ENCODE measurements at regions of chr10 and their contacts with region 1.

Region 1: DNA sequence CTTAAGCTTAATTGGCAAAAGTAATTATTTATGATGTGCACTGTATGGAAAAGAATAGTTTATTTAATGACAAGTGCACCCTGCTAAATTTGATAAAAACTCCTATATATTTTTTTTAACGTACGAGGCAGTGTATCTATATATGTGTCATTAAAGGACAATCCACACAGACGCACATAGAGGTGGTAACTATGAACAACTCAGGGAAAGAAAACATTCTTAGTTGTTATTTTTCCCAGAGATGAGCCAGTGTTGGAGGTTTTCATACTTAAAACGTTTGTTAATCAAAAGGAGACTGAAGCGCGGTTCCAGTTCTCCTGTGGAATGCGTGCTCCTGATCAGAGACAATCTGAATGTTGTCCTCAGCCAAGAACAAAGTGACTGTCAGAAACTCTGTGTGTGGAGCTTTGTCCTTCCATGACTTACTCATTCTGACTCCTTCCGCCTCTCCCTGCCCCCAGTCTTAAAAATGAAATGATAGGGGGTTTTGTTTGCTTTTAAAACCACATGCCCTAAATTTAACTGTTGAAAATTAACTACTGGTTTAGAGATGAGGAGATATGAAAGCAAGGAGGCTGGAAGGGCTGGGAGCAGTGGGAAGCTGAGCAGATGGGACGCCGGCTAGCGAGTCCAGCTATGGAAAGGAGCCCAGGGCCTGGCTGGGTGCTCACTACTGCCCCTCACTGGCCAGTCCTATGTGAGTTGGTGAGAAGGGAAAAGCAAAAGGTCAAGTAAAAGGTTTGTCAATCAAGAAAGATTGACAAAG is 99.6 kb downstream of the SVIL start:
- DNase-seq: peak; percentile 80
- ATAC-seq: peak; percentile 89
- H3K4me3 Mint-ChIP-seq: no peak overlapping the region
- H3K27ac Mint-ChIP-seq: no peak overlapping the region
- H3K4me1 Mint-ChIP-seq: peaks cover 49% of the 10 kb centered on the region
- H3K27me3 Mint-ChIP-seq: no peaks in the 10 kb centered on the region
- CTCF ChIP-seq: peak; percentile 75

Region 2: GRCh38 chr10:29508554-29509244 is 26.5 kb before region 1 on chr10:
- CTCF ChIA-PET with region 1: interaction called, 15 read pairs
- POLR2A ChIA-PET with region 1: no interaction called
- DNase-seq: no peak
- ATAC-seq: no peak
- H3K4me3 Mint-ChIP-seq: no peak overlapping the region
- H3K27ac Mint-ChIP-seq: peak overlapping the region; percentile 10; the same call in 1 of the 2 replicates
- H3K4me1 Mint-ChIP-seq: peaks cover 11% of the 10 kb centered on the region
- H3K27me3 Mint-ChIP-seq: no peaks in the 10 kb centered on the region
- CTCF ChIP-seq: no peak

Region 3: DNA sequence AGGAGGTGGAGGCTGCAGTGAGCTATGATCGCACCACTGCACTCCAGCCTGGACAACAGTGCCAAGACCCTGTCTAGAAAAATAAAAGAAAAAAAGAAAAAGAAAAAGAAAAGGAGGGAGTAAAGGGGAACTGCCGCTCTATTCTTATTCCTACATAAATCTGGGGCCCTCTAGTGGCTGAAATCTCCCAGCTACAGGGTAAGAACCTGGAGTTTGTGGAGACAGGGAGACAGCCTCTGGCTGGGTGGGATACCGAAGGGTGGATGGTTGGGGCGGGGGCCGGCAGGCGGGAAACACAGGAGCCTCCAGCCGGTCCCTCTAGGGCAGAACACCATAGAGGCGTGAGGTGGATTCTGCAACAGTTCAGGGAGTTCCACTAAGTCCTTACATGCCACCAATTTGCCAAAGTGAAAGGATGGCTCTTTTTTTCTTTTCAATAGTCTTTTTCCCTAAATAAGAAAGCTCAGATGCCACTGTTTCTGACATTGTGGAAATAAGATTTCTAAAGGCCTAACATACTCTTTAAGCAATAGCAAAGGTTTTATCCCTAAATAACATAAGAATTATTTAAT is 17.8 kb before region 1 on chr10:
- CTCF ChIA-PET with region 1: interaction called, 33 read pairs
- POLR2A ChIA-PET with region 1: no interaction called
- DNase-seq: peak; percentile 82
- ATAC-seq: peak; percentile 98
- H3K4me3 Mint-ChIP-seq: no peak overlapping the region
- H3K27ac Mint-ChIP-seq: no peak overlapping the region
- H3K4me1 Mint-ChIP-seq: peaks cover 14% of the 10 kb centered on the region
- H3K27me3 Mint-ChIP-seq: no peaks in the 10 kb centered on the region
- CTCF ChIP-seq: peak; percentile 44; the same call in 1 of the 2 replicates

Region 4: GRCh38 chr10:29555746-29556481 is 20.7 kb after region 1 on chr10:
- CTCF ChIA-PET with region 1: interaction called, 29 read pairs
- POLR2A ChIA-PET with region 1: interaction called, 3 read pairs
- DNase-seq: no peak
- ATAC-seq: peak; percentile 40; the same call in 1 of the 2 replicates
- H3K4me3 Mint-ChIP-seq: no peak overlapping the region
- H3K27ac Mint-ChIP-seq: peak overlapping the region; percentile 69
- H3K4me1 Mint-ChIP-seq: peaks cover 25% of the 10 kb centered on the region
- H3K27me3 Mint-ChIP-seq: no peaks in the 10 kb centered on the region
- CTCF ChIP-seq: no peak

Region 5: GRCh38 chr10:29569795-29570194 is 34.6 kb after region 1 on chr10:
- CTCF ChIA-PET with region 1: interaction called, 10 read pairs
- POLR2A ChIA-PET with region 1: no interaction called
- DNase-seq: no peak
- ATAC-seq: no peak
- H3K4me3 Mint-ChIP-seq: no peak overlapping the region
- H3K27ac Mint-ChIP-seq: no peak overlapping the region
- H3K4me1 Mint-ChIP-seq: peaks cover 51% of the 10 kb centered on the region
- H3K27me3 Mint-ChIP-seq: no peaks in the 10 kb centered on the region
- CTCF ChIP-seq: no peak

Region 6: GRCh38 chr10:29585488-29585980 is 50.3 kb after region 1 on chr10:
- CTCF ChIA-PET with region 1: interaction called, 18 read pairs
- POLR2A ChIA-PET with region 1: no interaction called
- DNase-seq: peak; percentile 72
- ATAC-seq: peak; percentile 78
- H3K4me3 Mint-ChIP-seq: peak overlapping the region; percentile 11; the same call in 1 of the 2 replicates
- H3K27ac Mint-ChIP-seq: peak overlapping the region; percentile 73
- H3K4me1 Mint-ChIP-seq: peaks cover 56% of the 10 kb centered on the region
- H3K27me3 Mint-ChIP-seq: peaks cover 3% of the 10 kb centered on the region; the same call in 1 of the 2 replicates
- CTCF ChIP-seq: no peak

Region 7: DNA sequence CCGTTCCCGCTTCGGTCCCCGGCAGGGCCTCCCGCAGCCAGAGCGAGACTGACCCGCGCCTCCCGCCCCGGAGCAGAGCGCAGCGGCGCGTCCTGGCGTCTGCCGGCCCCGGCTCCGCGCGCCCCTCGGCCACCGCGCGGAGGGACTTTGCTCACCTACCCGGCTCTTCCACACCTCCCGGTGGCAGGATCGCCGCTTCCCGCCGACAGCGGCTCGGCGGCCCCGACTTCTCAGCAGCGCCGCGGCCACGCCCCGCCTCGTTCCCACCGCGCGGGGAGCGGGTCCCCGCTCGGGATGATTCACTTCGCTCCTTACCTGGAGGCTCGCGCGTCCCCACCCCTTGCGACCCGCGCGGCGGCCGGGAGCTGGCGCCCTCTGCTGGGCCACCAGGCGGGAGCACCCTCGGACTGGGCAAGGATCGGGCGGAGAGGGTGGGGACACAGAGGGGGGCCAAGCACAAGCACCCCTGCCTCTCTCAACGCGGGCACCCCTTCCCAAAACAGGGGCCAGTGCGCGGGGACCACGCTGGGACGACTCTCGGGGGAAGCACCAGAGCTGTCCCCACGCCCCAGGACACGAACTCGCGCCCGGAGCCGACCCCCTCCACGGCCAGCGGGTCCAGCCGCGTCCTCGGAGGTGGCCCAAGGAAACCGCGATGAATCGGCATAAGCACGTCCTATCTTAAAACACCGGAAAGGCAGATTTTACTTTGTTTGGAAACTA is 200.6 kb after region 1 on chr10:
- CTCF ChIA-PET with region 1: interaction called, 15 read pairs
- POLR2A ChIA-PET with region 1: no interaction called
- DNase-seq: peak; percentile 85
- ATAC-seq: peak; percentile 71
- H3K4me3 Mint-ChIP-seq: peak overlapping the region; percentile 71
- H3K27ac Mint-ChIP-seq: no peak overlapping the region
- H3K4me1 Mint-ChIP-seq: peaks cover 45% of the 10 kb centered on the region
- H3K27me3 Mint-ChIP-seq: peaks cover 35% of the 10 kb centered on the region
- CTCF ChIP-seq: peak; percentile 75